ENCODE measurements at regions of chr10 and their contacts with region 1.

Region 1: DNA sequence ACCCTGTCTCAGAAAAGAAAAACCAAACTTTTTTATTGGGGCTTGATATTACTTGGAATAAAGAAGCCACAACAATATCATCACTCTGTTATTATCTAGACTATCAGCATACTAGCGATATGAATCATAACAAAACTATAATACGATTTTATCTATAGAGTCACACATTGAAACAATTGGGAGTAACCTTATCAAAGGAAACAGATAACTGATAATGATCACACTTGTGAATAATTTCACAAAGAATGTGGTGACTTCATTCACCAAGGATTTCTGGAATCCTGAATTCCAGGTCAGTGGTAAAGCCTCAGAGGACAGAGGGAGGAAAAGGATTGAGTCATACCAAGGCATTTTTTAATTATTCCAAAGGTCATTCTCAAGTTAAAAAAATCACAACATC is 32.1 kb upstream of the NMT2 start:
- DNase-seq: peak; percentile 94
- H3K4me3 ChIP-seq: no peak overlapping the region
- H3K27ac ChIP-seq: peak overlapping the region; percentile 100
- H3K4me1 ChIP-seq: peaks cover 70% of the 10 kb centered on the region
- H3K27me3 ChIP-seq: no peaks in the 10 kb centered on the region
- CTCF ChIP-seq: no peak
- POLR2A ChIP-seq: peak; percentile 82

Region 2: DNA sequence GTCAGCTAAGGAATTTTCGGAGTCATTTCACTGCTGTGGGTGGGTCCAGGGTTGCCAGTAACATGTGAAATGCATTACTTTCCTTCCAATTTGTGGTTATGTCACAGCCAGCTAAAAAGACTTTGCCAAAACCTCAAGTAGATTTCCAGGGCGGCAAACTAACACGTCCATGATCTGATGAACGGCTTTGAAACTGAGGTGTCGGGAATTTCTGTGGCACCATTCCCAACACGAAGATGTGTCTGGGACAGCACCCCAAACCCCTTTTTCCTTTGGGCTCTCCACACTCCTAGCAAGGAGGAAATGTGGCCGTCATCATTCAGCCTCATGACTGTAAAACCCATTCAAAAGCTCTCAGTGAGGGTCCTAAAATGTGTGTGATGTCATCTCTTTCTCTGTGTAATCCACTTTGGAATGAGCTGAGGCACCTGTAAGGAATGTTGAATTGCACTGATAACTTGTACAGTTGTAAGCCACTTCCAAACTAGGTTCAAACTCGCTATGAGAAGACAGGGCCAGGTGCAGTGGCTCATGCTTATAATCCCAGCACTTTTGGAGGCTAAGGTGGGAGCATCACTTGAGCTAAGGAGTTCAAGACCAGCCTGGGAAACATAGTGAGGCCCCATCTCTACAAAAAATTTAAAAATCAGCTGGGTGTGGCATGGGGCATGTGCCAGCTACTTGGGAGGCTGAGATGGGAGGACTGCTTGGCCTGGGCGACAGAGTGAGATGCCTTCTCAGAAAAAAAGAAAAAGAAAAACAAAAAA is 723.8 kb before region 1 on chr10:
- CTCF ChIA-PET with region 1: no interaction called
- POLR2A ChIA-PET with region 1: no interaction called
- dilution Hi-C with region 1: no loop called
- intact Hi-C with region 1: no loop called
- DNase-seq: no peak
- H3K4me3 ChIP-seq: no peak overlapping the region
- H3K27ac ChIP-seq: no peak overlapping the region
- H3K4me1 ChIP-seq: no peaks in the 10 kb centered on the region
- H3K27me3 ChIP-seq: peaks cover 7 to 15% of the 10 kb centered on the region in 2 experiments
- CTCF ChIP-seq: no peak
- POLR2A ChIP-seq: no peak

Region 3: DNA sequence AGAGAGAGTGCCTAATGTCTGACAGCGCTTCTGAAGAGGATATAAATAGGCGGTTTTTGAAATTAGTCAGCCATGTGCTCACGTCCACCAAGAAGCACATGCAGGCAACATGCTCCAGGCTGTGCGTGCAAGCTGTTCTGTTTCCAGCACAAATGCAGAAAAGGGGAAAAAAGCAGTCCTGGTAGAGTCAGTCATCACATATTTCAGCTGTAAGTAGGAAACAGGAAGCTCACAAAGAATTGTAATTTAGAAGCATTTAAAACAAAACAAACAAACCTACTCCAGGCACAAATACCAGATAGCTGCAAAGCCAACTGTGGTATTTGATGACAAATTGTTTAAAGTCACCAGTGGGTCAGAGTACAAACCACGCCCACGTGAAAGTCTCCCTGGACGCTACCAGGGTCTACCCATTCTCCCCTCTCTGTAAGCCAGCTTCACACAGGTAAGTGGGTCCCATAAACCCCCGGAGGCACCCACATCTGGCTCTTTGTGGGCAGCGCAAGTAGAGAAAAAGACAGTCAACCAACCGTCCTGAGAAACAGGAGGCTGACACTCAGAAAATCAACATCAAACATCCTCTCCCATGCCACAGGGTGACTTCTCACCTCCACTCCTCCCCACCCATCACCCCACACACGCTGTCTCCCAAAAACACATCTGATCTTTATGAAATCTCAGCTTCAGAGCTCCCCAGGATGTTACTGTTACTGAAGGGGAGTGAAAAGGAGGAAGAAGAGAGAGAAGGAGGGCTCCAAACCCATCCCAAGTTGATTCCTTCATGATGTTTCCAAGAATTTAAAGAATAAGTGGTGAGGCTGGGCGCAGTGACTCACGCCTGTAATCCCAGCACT is 612.3 kb before region 1 on chr10:
- CTCF ChIA-PET with region 1: no interaction called
- POLR2A ChIA-PET with region 1: no interaction called
- dilution Hi-C with region 1: no loop called
- intact Hi-C with region 1: loop called (anchors 5 kb)
- DNase-seq: peak; percentile 97
- H3K4me3 ChIP-seq: peak overlapping the region in 1 of 3 experiments; percentile 11
- H3K27ac ChIP-seq: peak overlapping the region; percentile 99
- H3K4me1 ChIP-seq: peaks cover 47% of the 10 kb centered on the region
- H3K27me3 ChIP-seq: no peaks in the 10 kb centered on the region
- CTCF ChIP-seq: no peak
- POLR2A ChIP-seq: no peak

Region 4: DNA sequence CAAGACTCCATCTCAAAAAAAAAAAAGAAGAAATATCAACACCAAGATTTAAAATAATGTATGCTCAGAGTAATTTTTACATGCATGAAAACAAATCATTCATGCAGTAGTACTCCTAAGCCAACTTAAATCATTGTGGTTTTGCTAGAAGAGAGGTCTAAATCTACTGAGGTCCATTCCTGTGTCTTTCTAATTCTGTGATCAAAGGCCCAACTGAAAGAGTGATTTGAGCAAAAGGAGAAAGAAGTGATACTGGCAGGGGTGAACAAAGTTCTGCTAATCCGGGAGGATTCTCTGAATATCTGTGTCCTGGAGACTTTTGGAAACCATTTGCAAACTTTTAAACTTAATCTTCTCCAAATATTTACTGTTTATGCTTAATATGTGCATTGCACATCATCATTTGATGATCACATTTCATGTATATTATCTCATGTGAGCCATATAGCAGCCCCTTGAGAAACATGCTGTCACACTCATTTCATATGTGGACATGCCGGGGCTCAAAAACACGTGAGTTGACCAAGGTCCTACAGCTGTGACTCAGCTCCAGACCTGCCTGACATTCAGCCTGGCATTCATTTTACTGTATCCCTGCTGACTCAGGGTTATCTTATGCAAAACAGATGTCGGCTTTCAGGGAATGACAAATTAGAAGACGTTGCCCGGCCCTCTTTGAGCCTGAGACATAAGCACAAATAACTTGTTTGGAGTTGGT is 502.4 kb before region 1 on chr10:
- CTCF ChIA-PET with region 1: no interaction called
- POLR2A ChIA-PET with region 1: no interaction called
- dilution Hi-C with region 1: no loop called
- intact Hi-C with region 1: no loop called
- DNase-seq: no peak
- H3K4me3 ChIP-seq: no peak overlapping the region
- H3K27ac ChIP-seq: no peak overlapping the region
- H3K4me1 ChIP-seq: no peaks in the 10 kb centered on the region
- H3K27me3 ChIP-seq: peaks cover 0 to 2% of the 10 kb centered on the region in 2 experiments
- CTCF ChIP-seq: no peak
- POLR2A ChIP-seq: no peak

Region 5: GRCh38 chr10:15245530-15245929 is 44.9 kb after region 1 on chr10:
- CTCF ChIA-PET with region 1: interaction called, 5 read pairs
- POLR2A ChIA-PET with region 1: no interaction called
- dilution Hi-C with region 1: no loop called
- intact Hi-C with region 1: loop called (anchors 5 kb)
- DNase-seq: peak; percentile 34
- H3K4me3 ChIP-seq: no peak overlapping the region
- H3K27ac ChIP-seq: no peak overlapping the region
- H3K4me1 ChIP-seq: peaks cover 14% of the 10 kb centered on the region
- H3K27me3 ChIP-seq: no peaks in the 10 kb centered on the region
- CTCF ChIP-seq: peak; percentile 24 to 36
- POLR2A ChIP-seq: no peak

Measured in endothelial cell of umbilical vein (primary cell).